Endothelial cell of umbilical vein (primary cell): ENCODE measurements at regions of chr4 and their contacts with region 1.

Region 1: GRCh38 chr4:153318696-153319320 is 25.7 kb upstream of the MND1 start:
- DNase-seq: peak; percentile 62
- H3K4me3 ChIP-seq: no peak overlapping the region
- H3K27ac ChIP-seq: no peak overlapping the region
- H3K4me1 ChIP-seq: no peaks in the 10 kb centered on the region
- H3K27me3 ChIP-seq: no peaks in the 10 kb centered on the region
- CTCF ChIP-seq: peak; percentile 55 to 62
- POLR2A ChIP-seq: no peak

Region 2: DNA sequence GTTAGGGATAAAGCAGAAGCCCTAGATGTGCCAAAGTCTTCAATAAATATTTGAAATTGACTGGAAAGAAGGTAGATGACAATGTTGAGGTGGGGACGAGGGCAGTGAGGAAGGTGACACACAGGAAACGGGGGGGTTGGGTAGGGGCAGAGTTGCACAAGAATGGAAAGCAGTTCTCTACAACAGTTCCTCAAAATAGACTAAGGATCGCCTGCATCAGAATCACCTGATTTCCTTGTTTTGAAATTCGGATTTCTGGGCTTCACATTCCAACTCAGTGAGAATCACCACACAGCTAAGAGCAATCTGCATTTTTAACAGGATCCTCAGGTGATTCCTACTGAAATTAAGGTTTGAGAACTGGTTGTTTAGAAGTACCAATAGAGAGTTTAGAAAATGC is 468.4 kb before region 1 on chr4:
- CTCF ChIA-PET with region 1: no interaction called
- POLR2A ChIA-PET with region 1: no interaction called
- dilution Hi-C with region 1: no loop called
- intact Hi-C with region 1: loop called (anchors 5 kb)
- DNase-seq: no peak
- H3K4me3 ChIP-seq: no peak overlapping the region
- H3K27ac ChIP-seq: no peak overlapping the region
- H3K4me1 ChIP-seq: peaks cover 7% of the 10 kb centered on the region
- H3K27me3 ChIP-seq: no peaks in the 10 kb centered on the region
- CTCF ChIP-seq: no peak
- POLR2A ChIP-seq: no peak

Region 3: GRCh38 chr4:153090670-153091385 is 228.0 kb before region 1 on chr4:
- CTCF ChIA-PET with region 1: no interaction called
- POLR2A ChIA-PET with region 1: no interaction called
- dilution Hi-C with region 1: no loop called
- intact Hi-C with region 1: no loop called
- DNase-seq: no peak
- H3K4me3 ChIP-seq: no peak overlapping the region
- H3K27ac ChIP-seq: no peak overlapping the region
- H3K4me1 ChIP-seq: no peaks in the 10 kb centered on the region
- H3K27me3 ChIP-seq: peaks cover 5 to 7% of the 10 kb centered on the region in 2 experiments
- CTCF ChIP-seq: no peak
- POLR2A ChIP-seq: no peak

Region 4: DNA sequence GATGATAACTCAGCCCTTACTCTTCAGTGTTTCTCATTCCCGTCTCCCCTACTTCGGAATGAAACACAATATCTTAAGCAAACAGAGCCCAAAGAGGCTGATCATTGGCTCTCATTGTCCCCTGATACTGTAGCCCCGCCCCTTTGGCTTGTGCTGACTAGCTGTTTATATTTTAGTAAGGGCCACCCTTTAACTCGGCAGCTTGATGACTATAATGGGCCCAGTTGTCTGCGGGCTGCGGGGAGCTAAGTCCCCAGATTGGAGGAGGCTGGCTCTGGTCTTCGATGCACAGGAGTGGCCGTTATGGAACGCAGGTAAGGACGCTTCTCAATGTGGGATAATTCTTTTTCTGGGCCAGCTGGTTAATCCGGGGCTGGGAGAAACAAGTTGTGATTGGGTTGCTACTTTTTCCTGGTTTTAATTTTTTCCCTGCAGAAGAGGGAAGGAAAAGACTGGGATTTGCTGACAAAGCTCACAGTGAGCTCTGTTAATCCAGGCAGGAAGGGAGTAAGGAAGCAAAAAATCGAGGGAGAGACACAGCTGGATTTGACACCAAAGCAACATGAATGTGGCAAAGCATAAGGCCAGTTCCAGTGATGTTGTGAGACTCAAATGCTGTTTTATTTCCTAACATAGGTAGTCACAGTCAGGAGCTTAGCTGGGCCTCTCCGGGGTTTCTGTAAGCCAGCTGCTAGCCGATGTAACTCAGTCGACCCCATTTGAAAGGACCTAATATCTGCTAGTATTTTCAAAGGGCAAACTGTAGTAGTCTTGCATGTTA is 114.4 kb before region 1 on chr4 and contains the start of gene TRIM2:
- CTCF ChIA-PET with region 1: interaction called, 11 read pairs
- POLR2A ChIA-PET with region 1: no interaction called
- dilution Hi-C with region 1: no loop called
- intact Hi-C with region 1: loop called (anchors 1 kb)
- DNase-seq: peak; percentile 67
- H3K4me3 ChIP-seq: no peak within 1 kb of the TSS
- H3K27ac ChIP-seq: no peak within 1 kb of the TSS
- H3K4me1 ChIP-seq: peaks cover 2% of the 10 kb centered on the region
- H3K27me3 ChIP-seq: no peaks in the 10 kb centered on the region
- CTCF ChIP-seq: no peak
- POLR2A ChIP-seq: no peak
- total RNA-seq, gene TRIM2: 16.4 and 19.7 TPM in 2 replicates